H1 (cell line): ENCODE measurements at regions of chr15 and their contacts with region 1.

Region 1: DNA sequence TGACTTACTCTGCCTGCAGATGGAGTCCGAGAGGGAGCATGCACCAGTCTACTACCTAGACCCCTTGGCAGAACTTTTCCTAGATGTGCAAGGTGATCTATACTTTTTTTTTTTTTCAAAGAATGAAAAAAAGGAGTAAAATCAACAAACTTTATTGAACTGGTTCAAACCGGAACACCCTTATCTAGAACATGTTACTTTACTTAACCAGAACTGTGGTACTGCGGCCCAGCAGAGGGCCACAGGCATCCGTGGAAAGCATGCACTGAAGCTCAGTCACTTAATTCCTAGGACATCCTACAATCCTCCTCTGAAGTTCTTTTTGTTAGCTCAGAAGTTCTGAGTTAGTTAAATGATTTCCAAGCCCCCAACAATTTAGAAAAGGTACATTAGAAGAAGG is 21.6 kb downstream of the CHAC1 start:
- DNase-seq: no peak
- H3K4me3 ChIP-seq: no peak overlapping the region
- H3K27ac ChIP-seq: no peak overlapping the region
- H3K4me1 ChIP-seq: peaks cover 0 to 2% (median 0%) of the 10 kb centered on the region in 4 experiments; a peak in 1 of 7 replicates
- H3K27me3 ChIP-seq: no peaks in the 10 kb centered on the region
- CTCF ChIP-seq: no peak
- EP300 ChIP-seq: no peak
- POLR2A ChIP-seq: no peak
- RAD21 ChIP-seq: no peak; a peak in 1 of 4 replicates

Region 2: GRCh38 chr15:40960926-40961325 is 14.0 kb before region 1 on chr15:
- CTCF ChIA-PET with region 1: interaction called, 25 read pairs
- POLR2A ChIA-PET with region 1: interaction called, 57 read pairs
- DNase-seq: no peak
- H3K4me3 ChIP-seq: no peak overlapping the region
- H3K27ac ChIP-seq: no peak overlapping the region
- H3K4me1 ChIP-seq: no peaks in the 10 kb centered on the region; a peak in 5 of 7 replicates
- H3K27me3 ChIP-seq: no peaks in the 10 kb centered on the region
- CTCF ChIP-seq: no peak
- EP300 ChIP-seq: no peak
- POLR2A ChIP-seq: no peak
- RAD21 ChIP-seq: no peak

Region 3: GRCh38 chr15:41022487-41023090 is 47.7 kb after region 1 on chr15:
- CTCF ChIA-PET with region 1: interaction called, 24 read pairs
- POLR2A ChIA-PET with region 1: no interaction called
- DNase-seq: peak in 1 of 2 experiments; percentile 58
- H3K4me3 ChIP-seq: no peak overlapping the region
- H3K27ac ChIP-seq: no peak overlapping the region
- H3K4me1 ChIP-seq: no peaks in the 10 kb centered on the region
- H3K27me3 ChIP-seq: no peaks in the 10 kb centered on the region
- CTCF ChIP-seq: peak; percentile 54 to 82 (median 82)
- EP300 ChIP-seq: no peak
- POLR2A ChIP-seq: no peak
- RAD21 ChIP-seq: peak; percentile 88

Region 4: DNA sequence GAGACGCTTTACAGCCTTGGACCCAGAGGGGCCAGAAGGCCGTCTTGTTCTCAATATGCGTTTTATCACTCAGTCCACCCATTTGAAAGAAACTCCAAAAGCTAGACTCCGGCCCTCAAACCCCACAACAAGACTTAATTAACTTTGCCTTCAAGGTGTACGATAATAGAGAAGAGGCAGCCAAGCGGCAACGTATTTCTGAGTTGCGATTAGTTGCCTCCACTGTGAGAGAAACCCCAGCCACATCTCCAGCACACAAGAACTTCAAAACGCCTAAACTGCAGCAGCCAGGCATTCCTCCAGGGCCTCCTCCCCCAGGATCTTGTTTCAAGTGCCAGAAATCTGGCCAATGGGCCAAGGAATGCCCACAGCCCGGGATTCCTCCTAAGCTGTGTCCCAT is 158.6 kb after region 1 on chr15:
- CTCF ChIA-PET with region 1: no interaction called
- POLR2A ChIA-PET with region 1: no interaction called
- DNase-seq: no peak
- H3K4me3 ChIP-seq: no peak overlapping the region
- H3K27ac ChIP-seq: no peak overlapping the region
- H3K4me1 ChIP-seq: no peaks in the 10 kb centered on the region
- H3K27me3 ChIP-seq: no peaks in the 10 kb centered on the region
- CTCF ChIP-seq: no peak
- EP300 ChIP-seq: no peak
- POLR2A ChIP-seq: no peak
- RAD21 ChIP-seq: no peak

Region 5: GRCh38 chr15:41161336-41161735 is 186.5 kb after region 1 on chr15:
- CTCF ChIA-PET with region 1: no interaction called
- POLR2A ChIA-PET with region 1: no interaction called
- DNase-seq: no peak
- H3K4me3 ChIP-seq: no peak overlapping the region
- H3K27ac ChIP-seq: no peak overlapping the region
- H3K4me1 ChIP-seq: no peaks in the 10 kb centered on the region
- H3K27me3 ChIP-seq: no peaks in the 10 kb centered on the region
- CTCF ChIP-seq: no peak
- EP300 ChIP-seq: no peak
- POLR2A ChIP-seq: no peak
- RAD21 ChIP-seq: no peak